ENCODE measurements at regions of chr5 and their contacts with region 1.

Region 1: GRCh38 chr5:88729084-88729828 is 153.7 kb downstream of the MEF2C start:
- DNase-seq: peak; percentile 89
- ATAC-seq: peak; percentile 38
- H3K4me3 ChIP-seq: no peak overlapping the region
- H3K4me3 Mint-ChIP-seq: peak overlapping the region; percentile 15
- H3K27ac ChIP-seq: peak overlapping the region; percentile 26 to 85
- H3K27ac Mint-ChIP-seq: peak overlapping the region; percentile 76
- H3K4me1 ChIP-seq: peaks cover 29 to 35% of the 10 kb centered on the region in 2 donors
- H3K4me1 Mint-ChIP-seq: peaks cover 42% of the 10 kb centered on the region
- H3K27me3 ChIP-seq: no peaks in the 10 kb centered on the region
- H3K27me3 Mint-ChIP-seq: no peaks in the 10 kb centered on the region
- CTCF ChIP-seq: peak; percentile 87

Region 2: GRCh38 chr5:88644676-88645075 is 84.6 kb before region 1 on chr5:
- CTCF ChIA-PET with region 1: no interaction called
- POLR2A ChIA-PET with region 1: no interaction called
- intact Hi-C with region 1: no loop called
- DNase-seq: no peak
- ATAC-seq: no peak
- H3K4me3 ChIP-seq: no peak overlapping the region
- H3K4me3 Mint-ChIP-seq: no peak overlapping the region
- H3K27ac ChIP-seq: no peak overlapping the region
- H3K27ac Mint-ChIP-seq: no peak overlapping the region
- H3K4me1 ChIP-seq: no peaks in the 10 kb centered on the region
- H3K4me1 Mint-ChIP-seq: no peaks in the 10 kb centered on the region
- H3K27me3 ChIP-seq: peaks cover 0 to 16% (median 4%) of the 10 kb centered on the region in 4 experiments
- H3K27me3 Mint-ChIP-seq: peaks cover 27% of the 10 kb centered on the region
- CTCF ChIP-seq: no peak

Region 3: DNA sequence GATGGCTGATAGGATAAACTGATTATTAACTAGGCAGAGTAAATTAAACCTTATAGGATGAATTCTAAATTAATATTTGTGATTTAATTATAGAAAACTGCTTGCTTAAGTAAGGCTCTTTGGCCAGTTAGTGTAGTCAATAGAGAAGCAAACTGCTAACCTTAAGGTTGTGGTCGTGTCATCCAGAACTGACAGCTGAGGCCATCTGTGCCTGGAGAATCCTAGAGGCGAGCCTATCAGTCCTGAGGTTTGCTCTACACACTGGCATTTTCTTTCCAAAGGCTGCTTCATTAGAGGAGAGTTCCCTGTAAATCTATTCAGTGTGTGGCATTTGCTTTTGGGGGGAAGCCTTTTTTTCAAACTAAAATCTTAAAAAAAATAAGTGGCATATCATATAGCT is 15.4 kb before region 1 on chr5:
- CTCF ChIA-PET with region 1: interaction called, 18 read pairs
- POLR2A ChIA-PET with region 1: no interaction called
- intact Hi-C with region 1: no loop called
- DNase-seq: no peak
- ATAC-seq: no peak
- H3K4me3 ChIP-seq: no peak overlapping the region
- H3K4me3 Mint-ChIP-seq: no peak overlapping the region
- H3K27ac ChIP-seq: no peak overlapping the region
- H3K27ac Mint-ChIP-seq: no peak overlapping the region
- H3K4me1 ChIP-seq: no peaks in the 10 kb centered on the region
- H3K4me1 Mint-ChIP-seq: no peaks in the 10 kb centered on the region
- H3K27me3 ChIP-seq: no peaks in the 10 kb centered on the region
- H3K27me3 Mint-ChIP-seq: no peaks in the 10 kb centered on the region
- CTCF ChIP-seq: no peak

Region 4: GRCh38 chr5:88785391-88786219 is 56.3 kb after region 1 on chr5:
- CTCF ChIA-PET with region 1: interaction called, 4 read pairs
- POLR2A ChIA-PET with region 1: no interaction called
- intact Hi-C with region 1: loop called (anchors 2 kb)
- DNase-seq: no peak
- ATAC-seq: no peak
- H3K4me3 ChIP-seq: no peak overlapping the region
- H3K4me3 Mint-ChIP-seq: peak overlapping the region; percentile 78
- H3K27ac ChIP-seq: peak overlapping the region; percentile 43 to 84
- H3K27ac Mint-ChIP-seq: peak overlapping the region; percentile 85
- H3K4me1 ChIP-seq: peaks cover 14 to 21% of the 10 kb centered on the region in 2 donors
- H3K4me1 Mint-ChIP-seq: peaks cover 59% of the 10 kb centered on the region
- H3K27me3 ChIP-seq: no peaks in the 10 kb centered on the region
- H3K27me3 Mint-ChIP-seq: no peaks in the 10 kb centered on the region
- CTCF ChIP-seq: no peak

Region 5: GRCh38 chr5:88883059-88883835 is 154.0 kb after region 1 on chr5 and contains the start of gene MEF2C:
- CTCF ChIA-PET with region 1: interaction called, 67 read pairs
- POLR2A ChIA-PET with region 1: interaction called, 19 read pairs
- intact Hi-C with region 1: loop called (anchors 1 kb)
- DNase-seq: peak; percentile 92
- ATAC-seq: peak; percentile 60
- H3K4me3 ChIP-seq: peak within 1 kb of the TSS; percentile 79 to 99 (median 89)
- H3K4me3 Mint-ChIP-seq: peak within 1 kb of the TSS; percentile 98
- H3K27ac ChIP-seq: peak within 1 kb of the TSS; percentile 73 to 90
- H3K27ac Mint-ChIP-seq: peak within 1 kb of the TSS; percentile 97
- H3K4me1 ChIP-seq: peaks cover 28 to 36% of the 10 kb centered on the region in 2 donors
- H3K4me1 Mint-ChIP-seq: peaks cover 50% of the 10 kb centered on the region
- H3K27me3 ChIP-seq: no peaks in the 10 kb centered on the region
- H3K27me3 Mint-ChIP-seq: no peaks in the 10 kb centered on the region
- CTCF ChIP-seq: no peak
- total RNA-seq, gene MEF2C: 333 and 354 TPM in 2 replicates

Region 6: DNA sequence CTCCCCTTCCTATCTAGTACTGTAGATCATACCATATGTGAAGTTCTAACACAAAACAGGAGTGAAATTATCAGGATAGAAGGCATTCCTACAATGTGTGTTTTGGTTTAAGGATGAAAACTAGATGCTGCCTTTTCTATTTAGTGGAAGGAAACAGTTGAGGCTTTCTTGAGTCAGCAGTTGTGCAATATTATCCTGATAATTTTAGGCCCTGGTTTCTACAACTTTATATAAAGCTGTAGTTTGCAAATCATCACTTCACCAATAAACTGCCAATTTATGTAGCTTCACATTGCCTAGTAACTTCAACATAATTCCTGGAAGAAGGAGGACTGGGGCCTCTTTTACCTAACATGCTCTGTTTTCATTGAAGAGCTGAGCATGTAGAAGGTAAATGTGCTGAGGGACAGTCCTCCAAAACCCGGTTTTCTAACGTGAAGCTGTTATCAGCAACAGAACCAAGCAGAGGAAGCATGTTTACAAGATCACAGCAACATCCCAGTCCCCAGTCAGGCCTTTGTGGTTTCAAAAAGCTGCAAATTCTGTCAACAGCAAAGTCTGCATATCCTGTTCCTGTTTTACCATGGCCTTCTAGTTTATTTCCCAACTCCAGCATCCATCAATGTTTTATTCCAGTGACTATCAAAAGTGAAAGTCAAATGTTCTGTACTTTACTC is 667.2 kb after region 1 on chr5:
- CTCF ChIA-PET with region 1: no interaction called
- POLR2A ChIA-PET with region 1: no interaction called
- intact Hi-C with region 1: loop called (anchors 5 kb)
- DNase-seq: peak; percentile 50
- ATAC-seq: peak; percentile 71
- H3K4me3 ChIP-seq: peak overlapping the region in 1 of 5 experiments; percentile 13
- H3K4me3 Mint-ChIP-seq: peak overlapping the region; percentile 70
- H3K27ac ChIP-seq: peak overlapping the region; percentile 77 to 89
- H3K27ac Mint-ChIP-seq: peak overlapping the region; percentile 92
- H3K4me1 ChIP-seq: peaks cover 37 to 49% of the 10 kb centered on the region in 2 donors
- H3K4me1 Mint-ChIP-seq: peaks cover 58% of the 10 kb centered on the region
- H3K27me3 ChIP-seq: no peaks in the 10 kb centered on the region
- H3K27me3 Mint-ChIP-seq: no peaks in the 10 kb centered on the region
- CTCF ChIP-seq: no peak

Region 7: DNA sequence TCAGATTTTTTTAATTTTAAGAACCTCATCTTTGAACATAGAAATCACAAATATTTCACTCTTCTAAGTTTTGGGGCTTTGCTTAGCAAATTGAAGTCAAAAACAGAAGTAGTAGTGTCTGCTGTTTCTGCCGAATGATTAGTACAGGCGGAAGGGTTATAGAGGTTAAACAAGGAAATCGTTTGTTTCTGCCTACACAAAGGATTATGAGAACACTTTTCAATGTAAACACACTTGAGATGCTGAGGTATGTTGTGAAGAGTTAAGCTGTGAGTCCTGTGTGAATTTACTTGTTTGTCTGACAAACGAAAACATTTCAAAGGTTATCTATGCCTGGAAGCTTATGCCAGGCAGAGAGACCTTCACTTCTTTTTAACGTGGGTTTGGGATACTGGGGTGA is 1455.5 kb after region 1 on chr5:
- CTCF ChIA-PET with region 1: interaction called, 16 read pairs
- POLR2A ChIA-PET with region 1: no interaction called
- intact Hi-C with region 1: no loop called
- DNase-seq: peak; percentile 7
- ATAC-seq: no peak
- H3K4me3 ChIP-seq: no peak overlapping the region
- H3K4me3 Mint-ChIP-seq: peak overlapping the region; percentile 24
- H3K27ac ChIP-seq: no peak overlapping the region
- H3K27ac Mint-ChIP-seq: peak overlapping the region; percentile 39
- H3K4me1 ChIP-seq: no peaks in the 10 kb centered on the region
- H3K4me1 Mint-ChIP-seq: peaks cover 5% of the 10 kb centered on the region
- H3K27me3 ChIP-seq: no peaks in the 10 kb centered on the region
- H3K27me3 Mint-ChIP-seq: peaks cover 9% of the 10 kb centered on the region
- CTCF ChIP-seq: no peak

Region 8: DNA sequence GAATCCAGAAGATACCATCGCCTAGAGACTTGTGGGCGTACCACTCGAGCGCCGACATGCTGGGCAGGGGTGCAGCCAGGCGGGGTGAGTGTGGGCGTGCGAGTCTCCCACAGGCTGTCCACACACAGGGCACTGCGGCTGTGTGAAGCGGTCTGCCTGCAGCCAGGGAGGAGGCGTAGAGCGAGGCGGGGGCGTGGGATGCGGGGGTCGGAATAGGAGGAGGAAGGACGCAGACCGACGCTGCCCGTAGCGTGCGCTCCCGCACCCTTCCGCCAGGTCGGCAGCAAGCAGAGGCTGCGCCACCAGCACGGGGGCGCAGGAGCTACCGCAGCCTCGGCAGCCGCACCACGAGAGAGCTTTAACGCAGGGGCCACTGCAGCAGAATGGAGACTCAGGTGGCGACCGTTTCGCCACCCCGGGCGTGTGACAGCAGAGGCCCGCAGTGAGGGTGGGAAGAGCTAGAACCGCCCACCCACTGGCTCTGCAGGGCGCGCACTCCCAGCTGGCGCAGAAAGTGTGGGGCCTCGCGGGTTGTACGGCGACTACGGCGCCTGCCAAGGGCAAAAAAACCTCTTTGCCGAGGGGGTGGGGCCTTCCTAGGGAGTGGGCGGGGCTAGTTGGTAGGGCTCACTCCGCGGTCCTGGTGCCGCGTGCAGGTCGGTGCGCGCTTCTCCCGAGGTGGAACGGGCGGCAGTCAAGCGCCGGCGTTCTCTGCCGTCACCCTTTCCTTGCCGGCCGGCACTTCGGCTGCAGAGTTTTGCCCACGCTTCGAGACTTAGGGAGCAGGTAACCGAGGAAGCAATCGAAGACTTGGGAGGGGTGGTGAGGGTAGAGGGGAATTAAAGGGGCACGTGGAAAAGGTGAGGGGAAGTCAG is 1745.2 kb after region 1 on chr5 and contains the starts of genes MBLAC2 and POLR3G:
- CTCF ChIA-PET with region 1: no interaction called
- POLR2A ChIA-PET with region 1: no interaction called
- intact Hi-C with region 1: loop called (anchors 2 kb)
- DNase-seq: peak; percentile 95
- ATAC-seq: peak; percentile 92
- H3K4me3 ChIP-seq: peak within 1 kb of the TSS; percentile 67 to 94 (median 86)
- H3K4me3 Mint-ChIP-seq: peak within 1 kb of the TSS; percentile 96
- H3K27ac ChIP-seq: peak within 1 kb of the TSS; percentile 53 to 55
- H3K27ac Mint-ChIP-seq: peak within 1 kb of the TSS; percentile 94
- H3K4me1 ChIP-seq: peaks cover 11 to 15% of the 10 kb centered on the region in 2 donors
- H3K4me1 Mint-ChIP-seq: peaks cover 24% of the 10 kb centered on the region
- H3K27me3 ChIP-seq: no peaks in the 10 kb centered on the region
- H3K27me3 Mint-ChIP-seq: no peaks in the 10 kb centered on the region
- CTCF ChIP-seq: peak; percentile 64
- total RNA-seq, gene MBLAC2: 11.5 and 13.3 TPM in 2 replicates
- total RNA-seq, gene POLR3G: 2.0 and 2.3 TPM in 2 replicates